ENCODE measurements at regions of chr3 and their contacts with region 1.

Region 1: DNA sequence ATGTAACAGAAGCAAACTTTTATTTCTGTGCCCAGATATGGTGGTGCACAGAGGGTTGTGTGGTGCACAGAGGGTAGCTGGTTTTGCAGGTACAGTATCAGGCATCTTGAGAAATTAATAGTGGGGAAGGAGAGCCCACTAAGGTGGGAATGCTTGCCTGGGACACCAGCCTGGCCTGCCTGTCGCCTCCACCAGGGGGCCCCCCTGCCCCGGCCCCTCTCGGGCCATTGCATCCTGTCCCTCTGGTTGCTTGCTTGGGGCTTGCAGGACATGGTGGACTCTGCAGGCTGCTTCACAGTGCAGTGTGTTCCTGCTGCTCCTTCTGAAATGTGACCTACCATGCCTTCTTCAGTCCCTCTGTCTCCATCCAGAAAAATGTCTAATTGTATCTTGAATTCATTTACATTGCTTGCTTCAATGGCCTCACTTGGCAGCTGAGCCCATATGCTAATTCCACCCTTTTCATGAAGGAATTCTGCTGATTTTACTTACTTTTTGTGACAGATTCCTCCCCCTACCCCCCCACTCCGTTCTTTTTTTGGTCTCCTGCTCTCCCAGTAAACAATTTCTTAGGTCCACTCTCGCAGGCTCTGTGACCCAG is 73.6 kb downstream of the EEFSEC start:
- DNase-seq: peak in 20 of 35 experiments; percentile 3 to 49 (median 20)
- ATAC-seq: peak in 3 of 4 experiments; percentile 50 to 69 (median 59)
- H3K4me3 ChIP-seq: no peak overlapping the region
- H3K4me3 Mint-ChIP-seq: no peak overlapping the region
- H3K27ac ChIP-seq: no peak overlapping the region
- H3K27ac Mint-ChIP-seq: no peak overlapping the region
- H3K4me1 ChIP-seq: peaks cover 0 to 13% of the 10 kb centered on the region in 2 experiments
- H3K4me1 Mint-ChIP-seq: peaks cover 6 to 21% (median 15%) of the 10 kb centered on the region in 3 donors
- H3K27me3 ChIP-seq: no peaks in the 10 kb centered on the region
- H3K27me3 Mint-ChIP-seq: no peaks in the 10 kb centered on the region

Region 2: GRCh38 chr3:127675651-127676391 is 551.1 kb before region 1 on chr3:
- CTCF ChIA-PET with region 1: no interaction called
- POLR2A ChIA-PET with region 1: interaction called in 1 of 2 experiments, 11 read pairs
- DNase-seq: peak in 3 of 35 experiments; percentile 1 to 22 (median 10)
- ATAC-seq: no peak
- H3K4me3 ChIP-seq: no peak overlapping the region
- H3K4me3 Mint-ChIP-seq: peak overlapping the region in 1 of 3 donors; percentile 92
- H3K27ac ChIP-seq: no peak overlapping the region
- H3K27ac Mint-ChIP-seq: peak overlapping the region; percentile 19 to 64
- H3K4me1 ChIP-seq: peaks cover 5 to 40% of the 10 kb centered on the region in 2 experiments
- H3K4me1 Mint-ChIP-seq: peaks cover 39 to 46% (median 43%) of the 10 kb centered on the region in 3 donors
- H3K27me3 ChIP-seq: no peaks in the 10 kb centered on the region
- H3K27me3 Mint-ChIP-seq: no peaks in the 10 kb centered on the region

Region 3: DNA sequence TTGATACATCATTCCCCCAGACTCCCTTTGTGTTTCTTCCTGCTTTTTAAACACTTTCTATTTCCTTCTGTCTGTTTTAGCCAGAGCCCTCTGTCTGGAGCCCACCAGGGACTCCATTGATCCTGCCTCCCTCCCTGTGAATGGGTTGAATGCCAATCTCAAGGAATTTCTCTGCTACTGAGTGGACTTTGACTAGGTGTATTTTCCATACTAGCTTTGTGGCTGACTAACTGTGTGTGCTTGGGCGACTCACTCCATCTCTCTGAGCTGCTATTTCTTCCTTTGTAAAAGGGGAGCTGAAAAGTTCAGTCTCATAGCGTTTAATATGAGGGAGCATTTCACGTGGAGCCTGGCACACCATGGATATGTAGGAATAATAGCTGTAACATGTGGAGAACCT is 25.2 kb after region 1 on chr3:
- CTCF ChIA-PET with region 1: no interaction called
- POLR2A ChIA-PET with region 1: interaction called in 1 of 2 experiments, 13 read pairs
- DNase-seq: no peak
- ATAC-seq: no peak
- H3K4me3 ChIP-seq: no peak overlapping the region
- H3K4me3 Mint-ChIP-seq: no peak overlapping the region
- H3K27ac ChIP-seq: no peak overlapping the region
- H3K27ac Mint-ChIP-seq: no peak overlapping the region
- H3K4me1 ChIP-seq: no peaks in the 10 kb centered on the region
- H3K4me1 Mint-ChIP-seq: peaks cover 16 to 48% (median 32%) of the 10 kb centered on the region in 3 donors
- H3K27me3 ChIP-seq: no peaks in the 10 kb centered on the region
- H3K27me3 Mint-ChIP-seq: no peaks in the 10 kb centered on the region

Region 4: GRCh38 chr3:129576514-129577352 is 1349.8 kb after region 1 on chr3:
- CTCF ChIA-PET with region 1: no interaction called
- POLR2A ChIA-PET with region 1: no interaction called
- DNase-seq: peak; percentile 59 to 93 (median 82)
- ATAC-seq: peak; percentile 85 to 93 (median 88)
- H3K4me3 ChIP-seq: peak overlapping the region; percentile 7 to 30
- H3K4me3 Mint-ChIP-seq: peak overlapping the region; percentile 28 to 60 (median 46)
- H3K27ac ChIP-seq: peak overlapping the region; percentile 95
- H3K27ac Mint-ChIP-seq: peak overlapping the region; percentile 96
- H3K4me1 ChIP-seq: peaks cover 15 to 71% of the 10 kb centered on the region in 2 experiments
- H3K4me1 Mint-ChIP-seq: peaks cover 21 to 64% (median 36%) of the 10 kb centered on the region in 3 donors
- H3K27me3 ChIP-seq: no peaks in the 10 kb centered on the region
- H3K27me3 Mint-ChIP-seq: no peaks in the 10 kb centered on the region

Measured in T-cell (primary cell).